ENCODE measurements at regions of chr17 and their contacts with region 1.

Region 1: GRCh38 chr17:51214920-51215319 is 44.9 kb downstream of the MBTD1 start:
- DNase-seq: no peak
- H3K4me3 ChIP-seq: no peak overlapping the region
- H3K27ac ChIP-seq: no peak overlapping the region
- H3K4me1 ChIP-seq: no peaks in the 10 kb centered on the region
- CTCF ChIP-seq: no peak

Region 2: DNA sequence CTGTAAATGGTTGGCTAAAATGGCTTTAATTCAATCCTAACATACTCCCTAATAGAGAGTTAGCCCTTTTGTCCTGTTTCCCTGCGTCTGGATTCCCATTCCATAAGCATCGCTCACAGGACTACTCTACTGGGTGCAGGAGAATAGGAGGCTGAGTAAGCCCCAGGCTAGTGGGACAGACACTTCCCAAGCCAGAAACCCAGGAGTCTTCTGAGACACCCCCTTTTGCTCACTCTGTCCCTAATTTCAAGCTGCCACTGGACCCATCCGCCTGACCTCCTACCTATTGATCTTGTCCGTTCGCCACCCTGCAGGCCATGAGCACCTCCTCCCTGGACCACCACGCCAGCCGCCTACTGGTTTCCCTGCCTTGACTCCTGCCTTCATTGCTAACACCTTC is 332.0 kb before region 1 on chr17:
- CTCF ChIA-PET with region 1: no interaction called
- POLR2A ChIA-PET with region 1: no interaction called
- intact Hi-C with region 1: no loop called
- DNase-seq: no peak
- H3K4me3 ChIP-seq: no peak overlapping the region
- H3K27ac ChIP-seq: no peak overlapping the region
- H3K4me1 ChIP-seq: peaks cover 6% of the 10 kb centered on the region
- CTCF ChIP-seq: no peak

Region 3: GRCh38 chr17:51180486-51180885 is 34.4 kb before region 1 on chr17:
- CTCF ChIA-PET with region 1: no interaction called
- POLR2A ChIA-PET with region 1: interaction called, 3 read pairs
- intact Hi-C with region 1: loop called (anchors 5 kb)
- DNase-seq: no peak
- H3K4me3 ChIP-seq: no peak overlapping the region
- H3K27ac ChIP-seq: no peak overlapping the region
- H3K4me1 ChIP-seq: no peaks in the 10 kb centered on the region
- CTCF ChIP-seq: no peak